Activated CD4-positive, alpha-beta memory T cell treated with anti-CD3 and anti-CD28 coated beads for 36 hours (primary cell): ENCODE measurements at regions of chr6 and their contacts with region 1.

Region 1: GRCh38 chr6:1609648-1610496 is at the start of gene FOXC1:
- DNase-seq: peak; percentile 65
- H3K4me3 Mint-ChIP-seq: peak within 1 kb of the TSS; percentile 59
- H3K27ac Mint-ChIP-seq: no peak within 1 kb of the TSS
- H3K4me1 Mint-ChIP-seq: peaks cover 50% of the 10 kb centered on the region
- H3K27me3 Mint-ChIP-seq: peaks cover 61% of the 10 kb centered on the region
- total RNA-seq, gene FOXC1: 0.05 to 0.07 TPM

Region 2: DNA sequence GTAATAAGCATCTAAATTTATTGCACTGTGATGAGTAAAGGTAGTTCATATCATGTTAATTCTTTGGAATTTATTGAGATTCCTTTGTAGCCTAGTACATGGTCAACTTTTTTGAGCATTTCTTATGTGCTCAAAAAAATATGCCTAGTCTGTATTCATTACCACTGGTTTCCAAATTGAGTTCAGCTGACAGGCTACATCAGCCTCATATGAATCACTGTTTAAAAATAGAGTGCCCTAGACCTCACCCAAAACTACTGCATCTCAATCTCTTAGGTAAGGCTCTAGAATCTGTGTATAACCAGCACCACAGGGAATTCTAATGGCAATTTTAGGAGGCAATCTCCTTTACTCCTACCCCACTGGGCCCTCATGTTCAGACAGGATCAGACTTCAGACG is 237.2 kb before region 1 on chr6:
- CTCF ChIA-PET with region 1: no interaction called
- POLR2A ChIA-PET with region 1: no interaction called
- intact Hi-C with region 1: no loop called
- DNase-seq: no peak
- H3K4me3 Mint-ChIP-seq: no peak overlapping the region
- H3K27ac Mint-ChIP-seq: no peak overlapping the region
- H3K4me1 Mint-ChIP-seq: peaks cover 3% of the 10 kb centered on the region
- H3K27me3 Mint-ChIP-seq: peaks cover 50% of the 10 kb centered on the region

Region 3: DNA sequence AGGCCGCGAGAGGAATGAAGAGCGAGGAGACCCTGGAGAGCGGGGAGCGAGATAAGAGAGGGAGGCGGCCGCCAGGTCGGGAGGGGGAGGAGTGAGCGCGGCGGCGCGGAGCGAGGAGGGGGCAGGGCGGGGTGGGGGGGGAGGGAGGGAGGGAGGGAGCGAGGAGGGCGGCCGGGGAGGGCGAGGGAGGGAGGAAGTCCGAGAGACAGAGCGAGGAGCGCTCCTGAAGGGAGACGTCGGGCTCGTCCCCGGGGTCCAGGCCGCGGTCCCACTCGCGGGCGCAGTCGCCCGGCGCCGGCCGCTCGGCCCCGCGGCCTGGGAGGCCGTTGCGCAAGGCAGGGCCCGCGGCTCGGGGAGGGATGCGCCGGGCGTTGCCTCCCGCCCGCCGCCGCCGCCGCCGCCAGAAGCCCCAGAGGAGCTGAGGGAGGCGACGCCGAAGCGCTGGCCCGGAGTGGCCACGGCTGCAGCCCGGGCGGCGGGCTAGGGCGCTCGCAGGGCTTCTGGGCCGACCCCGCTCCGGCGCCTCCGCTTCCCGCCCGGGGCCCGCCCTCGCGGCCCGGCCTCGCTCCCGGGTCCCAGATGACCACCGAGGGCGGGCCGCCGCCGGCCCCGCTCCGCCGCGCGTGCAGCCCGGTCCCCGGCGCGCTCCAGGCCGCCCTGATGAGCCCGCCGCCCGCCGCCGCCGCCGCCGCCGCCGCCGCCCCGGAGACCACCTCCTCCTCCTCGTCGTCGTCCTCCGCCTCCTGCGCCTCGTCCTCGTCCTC is 220.3 kb before region 1 on chr6 and contains the start of gene FOXF2:
- CTCF ChIA-PET with region 1: no interaction called
- POLR2A ChIA-PET with region 1: no interaction called
- intact Hi-C with region 1: loop called (anchors 5 kb)
- DNase-seq: no peak
- H3K4me3 Mint-ChIP-seq: peak within 1 kb of the TSS; percentile 62
- H3K27ac Mint-ChIP-seq: no peak within 1 kb of the TSS
- H3K4me1 Mint-ChIP-seq: peaks cover 20% of the 10 kb centered on the region
- H3K27me3 Mint-ChIP-seq: peaks cover 75% of the 10 kb centered on the region
- total RNA-seq, gene FOXF2: not detected

Region 4: DNA sequence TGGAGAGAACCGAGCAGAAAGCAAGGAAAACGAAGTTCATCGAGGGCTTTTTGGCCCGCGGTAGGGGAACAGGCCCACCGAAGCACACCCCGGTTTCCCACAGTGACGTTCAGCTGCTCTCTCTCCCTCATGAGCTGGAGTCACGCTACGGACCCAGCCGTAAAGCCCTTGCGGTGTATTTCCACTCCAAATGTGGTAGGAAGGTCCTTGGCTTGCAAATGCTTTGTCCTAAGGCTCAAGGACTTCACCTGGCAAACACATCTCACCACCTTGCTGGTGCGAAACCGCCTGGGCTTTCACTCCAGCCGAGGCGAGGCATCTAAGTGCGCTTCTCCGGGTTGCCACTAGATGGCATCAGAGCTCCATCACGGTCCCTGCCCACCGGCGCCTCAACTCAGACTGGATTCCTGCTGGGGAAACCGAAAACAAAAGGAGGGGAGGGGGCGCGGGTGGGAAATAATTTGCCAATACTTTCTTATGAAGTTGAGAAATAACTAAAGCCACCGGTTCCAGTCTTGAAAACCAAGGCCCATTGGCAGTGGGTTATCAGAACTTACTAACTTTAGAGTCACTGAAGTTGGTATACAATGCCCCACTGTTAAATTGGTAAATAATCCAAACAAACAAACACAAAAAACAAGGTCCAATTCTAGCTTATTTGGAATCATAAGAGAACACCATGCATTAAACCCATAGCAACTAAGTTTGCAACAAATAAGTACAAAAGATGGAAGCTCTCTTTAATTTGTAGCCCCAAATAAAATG is 13.6 kb before region 1 on chr6:
- CTCF ChIA-PET with region 1: interaction called, 28 read pairs
- POLR2A ChIA-PET with region 1: no interaction called
- intact Hi-C with region 1: no loop called
- DNase-seq: peak; percentile 73
- H3K4me3 Mint-ChIP-seq: no peak overlapping the region
- H3K27ac Mint-ChIP-seq: no peak overlapping the region
- H3K4me1 Mint-ChIP-seq: peaks cover 4% of the 10 kb centered on the region
- H3K27me3 Mint-ChIP-seq: peaks cover 59% of the 10 kb centered on the region

Region 5: DNA sequence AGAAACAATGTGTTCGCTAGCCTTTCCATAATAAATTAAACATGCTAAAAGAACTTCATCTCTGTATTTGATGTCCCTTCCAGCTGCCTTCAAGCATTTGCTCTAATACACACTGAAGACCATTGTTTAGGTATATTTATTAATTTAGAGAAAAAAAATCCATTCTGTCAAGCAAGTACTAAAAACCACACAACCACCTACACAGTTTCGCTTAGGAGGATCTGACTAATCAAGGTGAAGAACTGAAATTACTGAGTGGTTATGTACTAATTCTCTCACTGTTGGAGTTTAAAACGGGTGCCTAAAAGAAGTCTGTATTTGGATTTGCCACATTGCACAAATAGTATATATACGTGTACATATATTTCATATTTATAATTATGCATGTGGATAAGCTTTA is 576.6 kb after region 1 on chr6:
- CTCF ChIA-PET with region 1: no interaction called
- POLR2A ChIA-PET with region 1: no interaction called
- intact Hi-C with region 1: loop called (anchors 5 kb)
- DNase-seq: no peak
- H3K4me3 Mint-ChIP-seq: no peak overlapping the region
- H3K27ac Mint-ChIP-seq: no peak overlapping the region
- H3K4me1 Mint-ChIP-seq: peaks cover 16% of the 10 kb centered on the region
- H3K27me3 Mint-ChIP-seq: peaks cover 15% of the 10 kb centered on the region

Region 6: DNA sequence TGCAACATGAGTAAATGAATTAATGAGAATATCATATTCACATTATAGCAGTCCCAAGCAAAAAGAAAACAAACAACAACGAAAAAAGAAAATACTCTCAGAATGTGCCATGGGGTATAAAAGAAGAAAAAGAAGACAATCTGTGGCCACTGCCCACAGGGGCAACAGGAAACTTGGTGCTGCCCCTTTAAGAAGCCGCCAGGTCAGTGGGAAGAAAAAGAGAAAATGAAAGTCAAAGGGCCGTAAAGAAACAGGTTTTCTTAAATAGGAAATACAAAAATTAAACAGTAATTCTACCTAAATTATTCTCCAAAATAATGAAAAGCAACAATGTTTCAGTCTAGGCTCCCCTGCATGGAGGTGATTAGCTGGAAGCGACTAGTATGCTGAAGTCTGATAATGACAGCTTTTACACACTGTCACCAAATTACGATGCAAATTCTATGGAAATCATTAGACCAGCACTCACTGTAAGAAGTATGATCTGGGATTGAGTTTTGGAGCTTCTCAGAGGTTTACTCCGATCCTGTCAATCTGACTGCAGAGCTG is 611.9 kb after region 1 on chr6:
- CTCF ChIA-PET with region 1: no interaction called
- POLR2A ChIA-PET with region 1: no interaction called
- intact Hi-C with region 1: no loop called
- DNase-seq: no peak
- H3K4me3 Mint-ChIP-seq: peak overlapping the region; percentile 72
- H3K27ac Mint-ChIP-seq: no peak overlapping the region
- H3K4me1 Mint-ChIP-seq: peaks cover 21% of the 10 kb centered on the region
- H3K27me3 Mint-ChIP-seq: no peaks in the 10 kb centered on the region